ENCODE measurements at regions of chr12 and their contacts with region 1.

Region 1: GRCh38 chr12:63766498-63766897 is 13.2 kb upstream of the RXYLT1 start:
- DNase-seq: no peak
- H3K4me3 ChIP-seq: no peak overlapping the region
- CTCF ChIP-seq: no peak

Region 2: GRCh38 chr12:63420206-63420644 is 346.3 kb before region 1 on chr12:
- CTCF ChIA-PET with region 1: interaction called, 16 read pairs
- POLR2A ChIA-PET with region 1: no interaction called
- DNase-seq: peak; percentile 5
- H3K4me3 ChIP-seq: no peak overlapping the region
- CTCF ChIP-seq: peak; percentile 74

Region 3: GRCh38 chr12:63753744-63754143 is 12.8 kb before region 1 on chr12:
- CTCF ChIA-PET with region 1: interaction called, 44 read pairs
- POLR2A ChIA-PET with region 1: no interaction called
- DNase-seq: no peak
- H3K4me3 ChIP-seq: no peak overlapping the region
- CTCF ChIP-seq: no peak

Region 4: DNA sequence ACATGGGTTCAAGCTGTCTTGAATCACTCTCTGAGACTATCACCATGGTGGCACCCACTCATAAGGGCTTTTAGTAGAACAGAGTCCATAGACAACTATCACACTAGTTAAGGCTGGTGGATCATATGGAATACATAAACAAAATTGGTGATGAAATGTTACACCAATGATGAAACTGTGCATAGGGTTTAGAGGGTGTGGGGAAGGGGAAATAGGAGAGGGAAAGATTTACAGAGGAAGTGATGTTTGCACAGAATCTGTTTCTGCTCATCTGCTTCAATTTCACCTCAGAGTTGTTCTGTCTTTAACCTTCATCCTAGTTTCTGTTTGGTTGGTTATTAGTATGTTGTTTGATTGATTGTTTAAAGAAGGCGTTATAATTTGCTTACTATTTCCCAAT is 10.8 kb after region 1 on chr12:
- CTCF ChIA-PET with region 1: interaction called, 13 read pairs
- POLR2A ChIA-PET with region 1: no interaction called
- DNase-seq: no peak
- H3K4me3 ChIP-seq: no peak overlapping the region
- CTCF ChIP-seq: no peak